A549 (cell line): ENCODE measurements at regions of chr22 and their contacts with region 1.

Region 1: GRCh38 chr22:20981787-20982562 is at the start of gene LZTR1:
- DNase-seq: peak; percentile 55 to 75
- ATAC-seq: peak; percentile 91 to 96
- H3K4me3 ChIP-seq: peak within 1 kb of the TSS; percentile 73
- H3K27ac ChIP-seq: peak within 1 kb of the TSS; percentile 92 to 97
- H3K4me1 ChIP-seq: peaks cover 11% of the 10 kb centered on the region; the same call in 2 of the 3 replicates
- CTCF ChIP-seq: peak; percentile 32; the same call in 1 of the 3 replicates
- EP300 ChIP-seq: no peak
- POLR2A ChIP-seq: peak; percentile 92
- RAD21 ChIP-seq: peak; percentile 8 to 23; a peak in 3 of 5 replicates
- polyA plus RNA-seq, gene LZTR1: 14.1 and 14.4 TPM in 2 replicates

Region 2: GRCh38 chr22:20970939-20971657 is 10.9 kb before region 1 on chr22:
- CTCF ChIA-PET with region 1: interaction called, 9 read pairs
- POLR2A ChIA-PET with region 1: interaction called, 12 read pairs
- DNase-seq: no peak
- ATAC-seq: no peak
- H3K4me3 ChIP-seq: no peak overlapping the region
- H3K27ac ChIP-seq: no peak overlapping the region
- H3K4me1 ChIP-seq: no peaks in the 10 kb centered on the region
- CTCF ChIP-seq: no peak
- EP300 ChIP-seq: no peak
- POLR2A ChIP-seq: no peak
- RAD21 ChIP-seq: no peak

Region 3: DNA sequence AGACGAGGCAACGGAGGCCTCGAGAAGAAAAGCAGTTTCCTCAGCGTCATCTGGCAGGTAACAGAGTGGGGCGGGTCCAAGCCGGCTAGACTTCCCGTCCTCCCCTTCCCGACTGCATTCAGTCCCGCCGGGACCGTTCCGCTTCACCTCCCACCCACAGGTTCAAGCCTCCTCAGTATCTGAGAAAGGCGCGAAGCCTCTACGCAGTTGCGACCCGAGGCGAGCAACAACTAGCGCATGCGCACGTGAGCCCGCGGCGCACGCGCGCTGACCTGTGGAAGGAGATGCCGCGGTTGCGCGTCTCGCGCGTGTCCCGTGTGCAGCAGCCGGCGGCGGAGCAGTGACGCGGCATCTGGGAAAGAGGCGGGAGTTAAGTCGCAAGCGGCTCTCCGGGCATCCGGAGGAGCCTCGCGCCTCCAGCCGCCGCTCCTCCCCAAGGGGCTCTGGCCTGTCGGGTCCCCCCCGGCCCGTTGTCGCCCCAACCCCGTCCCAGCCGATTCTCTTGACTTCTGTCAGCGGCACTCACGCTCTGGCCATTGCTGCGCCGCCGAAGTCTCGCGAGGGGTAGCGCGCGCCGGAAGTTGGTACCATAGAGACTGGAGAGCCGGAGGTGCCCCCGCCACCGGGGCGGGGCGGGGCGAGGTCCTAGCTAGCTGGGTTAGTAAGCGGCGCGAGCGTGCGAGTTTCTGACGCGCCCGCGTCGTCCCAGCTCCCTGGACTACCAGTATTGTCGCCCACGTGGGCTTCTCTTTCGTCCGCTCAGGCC is 19.8 kb after region 1 on chr22 and contains the start of gene THAP7:
- CTCF ChIA-PET with region 1: interaction called, 8 read pairs
- POLR2A ChIA-PET with region 1: interaction called, 22 read pairs
- DNase-seq: peak; percentile 84 to 92
- ATAC-seq: peak; percentile 92 to 95
- H3K4me3 ChIP-seq: peak within 1 kb of the TSS; percentile 90
- H3K27ac ChIP-seq: peak within 1 kb of the TSS; percentile 99
- H3K4me1 ChIP-seq: peaks cover 16% of the 10 kb centered on the region; the same call in 2 of the 3 replicates
- CTCF ChIP-seq: no peak
- EP300 ChIP-seq: no peak
- POLR2A ChIP-seq: peak; percentile 66
- RAD21 ChIP-seq: peak in 1 of 2 experiments; percentile 2; a peak in 1 of 5 replicates
- polyA plus RNA-seq, gene THAP7: 15.5 and 15.9 TPM in 2 replicates

Region 4: DNA sequence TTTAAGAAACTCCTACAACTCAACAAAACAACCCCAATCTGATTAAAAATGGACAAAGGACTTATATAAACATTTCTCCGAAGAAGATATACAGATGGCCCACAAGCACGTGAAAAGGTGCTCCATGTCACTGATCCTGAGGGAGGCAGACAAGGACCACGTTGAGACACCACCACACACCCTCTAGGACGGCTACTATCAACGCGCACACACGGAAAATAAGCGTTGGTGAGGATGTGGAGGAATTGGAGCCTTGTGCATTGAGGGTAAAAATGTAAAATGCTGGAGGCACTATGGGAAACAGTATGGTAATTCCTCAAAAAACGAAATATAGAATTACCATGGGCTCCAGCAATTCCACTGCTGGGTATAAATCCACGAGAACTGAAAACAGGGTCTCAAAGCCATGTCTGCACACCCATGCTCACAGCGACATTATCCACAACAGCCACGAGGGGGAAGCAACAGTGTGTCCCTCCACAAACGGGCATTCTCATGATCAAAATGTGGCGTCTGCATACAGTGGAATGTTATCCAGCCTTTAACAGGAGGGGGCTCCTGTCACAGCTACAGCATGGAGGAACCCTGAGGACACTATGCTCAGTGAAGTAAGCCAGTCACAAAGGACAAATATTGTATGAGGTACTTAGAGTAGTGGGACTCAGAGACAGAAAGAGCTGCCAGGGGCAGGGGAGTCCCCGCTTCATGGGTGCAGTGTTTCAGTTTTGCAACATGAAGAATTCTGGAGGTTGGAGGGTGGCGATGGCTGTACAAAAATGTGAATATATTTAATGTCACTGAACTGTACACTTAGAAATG is 731.1 kb after region 1 on chr22:
- CTCF ChIA-PET with region 1: no interaction called
- POLR2A ChIA-PET with region 1: no interaction called
- DNase-seq: peak; percentile 70 to 72
- ATAC-seq: peak; percentile 96 to 97
- H3K4me3 ChIP-seq: no peak overlapping the region
- H3K27ac ChIP-seq: no peak overlapping the region
- H3K4me1 ChIP-seq: no peaks in the 10 kb centered on the region; the same call in 2 of the 3 replicates
- CTCF ChIP-seq: peak; percentile 57
- EP300 ChIP-seq: no peak
- POLR2A ChIP-seq: no peak
- RAD21 ChIP-seq: peak; percentile 60 to 62; a peak in 4 of 5 replicates